ENCODE measurements at regions of chr11 and their contacts with region 1.

Region 1: DNA sequence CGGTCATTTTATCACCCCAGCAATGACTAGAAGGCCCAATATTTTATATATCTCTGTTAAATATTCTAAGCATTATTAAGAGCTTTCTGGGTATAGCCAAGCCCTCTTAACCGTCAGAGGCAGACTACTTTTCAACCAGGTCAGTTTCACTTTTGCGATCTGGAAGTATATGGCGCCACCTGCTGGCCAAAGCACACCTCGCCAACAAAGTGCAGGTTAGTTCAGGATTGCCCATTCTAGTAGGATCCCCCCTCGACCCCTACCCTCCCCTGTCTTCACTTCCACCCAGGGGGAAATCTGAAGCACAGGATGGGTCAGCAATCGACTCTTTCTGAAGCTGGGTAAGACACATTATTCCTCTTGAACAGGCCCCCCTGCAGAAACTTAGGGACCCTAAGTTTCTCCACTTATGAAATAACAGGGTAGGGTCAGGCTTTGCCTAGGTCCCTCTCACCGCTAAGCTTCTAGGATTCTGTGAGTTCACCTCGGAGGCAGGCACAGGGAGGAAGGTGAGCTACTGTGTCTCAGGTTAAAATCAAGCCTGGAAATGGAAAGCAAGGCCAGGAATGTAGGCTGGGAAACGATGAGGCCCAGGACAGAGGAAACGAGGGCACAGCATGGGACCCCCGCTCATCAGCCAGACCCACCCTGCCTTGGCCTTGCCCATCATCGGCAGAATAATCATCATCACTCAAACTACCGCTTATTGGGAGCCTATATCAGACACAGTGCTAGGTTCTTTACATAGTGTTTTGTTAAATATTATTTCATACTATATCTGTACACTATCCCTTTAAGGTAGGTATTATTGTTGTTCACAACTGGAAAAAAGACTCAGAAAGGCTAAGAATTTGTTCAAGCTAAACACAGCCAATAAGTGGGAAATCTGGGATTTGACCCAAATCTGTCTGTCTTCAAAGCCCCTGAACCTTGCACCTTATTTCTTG is 35.6 kb downstream of the KCNJ1 start:
- DNase-seq: peak; percentile 88
- H3K4me3 ChIP-seq: no peak overlapping the region
- H3K27ac ChIP-seq: no peak overlapping the region
- H3K4me1 ChIP-seq: peaks cover 17% of the 10 kb centered on the region
- H3K27me3 ChIP-seq: no peaks in the 10 kb centered on the region
- CTCF ChIP-seq: peak; percentile 98

Region 2: GRCh38 chr11:128026596-128026995 is 804.9 kb before region 1 on chr11:
- CTCF ChIA-PET with region 1: no interaction called
- POLR2A ChIA-PET with region 1: no interaction called
- intact Hi-C with region 1: loop called (anchors 2 kb)
- DNase-seq: no peak
- H3K4me3 ChIP-seq: no peak overlapping the region
- H3K27ac ChIP-seq: no peak overlapping the region
- H3K4me1 ChIP-seq: no peaks in the 10 kb centered on the region
- H3K27me3 ChIP-seq: peaks cover 70% of the 10 kb centered on the region
- CTCF ChIP-seq: no peak

Region 3: GRCh38 chr11:128157423-128158298 is 673.8 kb before region 1 on chr11:
- CTCF ChIA-PET with region 1: interaction called, 4 read pairs
- POLR2A ChIA-PET with region 1: no interaction called
- intact Hi-C with region 1: loop called (anchors 5 kb)
- DNase-seq: peak; percentile 86
- H3K4me3 ChIP-seq: no peak overlapping the region
- H3K27ac ChIP-seq: no peak overlapping the region
- H3K4me1 ChIP-seq: no peaks in the 10 kb centered on the region
- H3K27me3 ChIP-seq: peaks cover 14% of the 10 kb centered on the region
- CTCF ChIP-seq: peak; percentile 98

Region 4: GRCh38 chr11:128172046-128172878 is 659.2 kb before region 1 on chr11:
- CTCF ChIA-PET with region 1: no interaction called
- POLR2A ChIA-PET with region 1: no interaction called
- intact Hi-C with region 1: loop called (anchors 5 kb)
- DNase-seq: peak; percentile 88
- H3K4me3 ChIP-seq: no peak overlapping the region
- H3K27ac ChIP-seq: no peak overlapping the region
- H3K4me1 ChIP-seq: peaks cover 9% of the 10 kb centered on the region
- H3K27me3 ChIP-seq: peaks cover 23% of the 10 kb centered on the region
- CTCF ChIP-seq: peak; percentile 91

Region 5: GRCh38 chr11:128279866-128280265 is 551.6 kb before region 1 on chr11:
- CTCF ChIA-PET with region 1: no interaction called
- POLR2A ChIA-PET with region 1: no interaction called
- intact Hi-C with region 1: no loop called
- DNase-seq: no peak
- H3K4me3 ChIP-seq: no peak overlapping the region
- H3K27ac ChIP-seq: no peak overlapping the region
- H3K4me1 ChIP-seq: no peaks in the 10 kb centered on the region
- H3K27me3 ChIP-seq: peaks cover 93% of the 10 kb centered on the region
- CTCF ChIP-seq: no peak

Region 6: GRCh38 chr11:128290106-128290840 is 541.2 kb before region 1 on chr11:
- CTCF ChIA-PET with region 1: no interaction called
- POLR2A ChIA-PET with region 1: no interaction called
- intact Hi-C with region 1: loop called (anchors 5 kb)
- DNase-seq: peak; percentile 65
- H3K4me3 ChIP-seq: no peak overlapping the region
- H3K27ac ChIP-seq: no peak overlapping the region
- H3K4me1 ChIP-seq: no peaks in the 10 kb centered on the region
- H3K27me3 ChIP-seq: peaks cover 76% of the 10 kb centered on the region
- CTCF ChIP-seq: peak; percentile 89

Region 7: DNA sequence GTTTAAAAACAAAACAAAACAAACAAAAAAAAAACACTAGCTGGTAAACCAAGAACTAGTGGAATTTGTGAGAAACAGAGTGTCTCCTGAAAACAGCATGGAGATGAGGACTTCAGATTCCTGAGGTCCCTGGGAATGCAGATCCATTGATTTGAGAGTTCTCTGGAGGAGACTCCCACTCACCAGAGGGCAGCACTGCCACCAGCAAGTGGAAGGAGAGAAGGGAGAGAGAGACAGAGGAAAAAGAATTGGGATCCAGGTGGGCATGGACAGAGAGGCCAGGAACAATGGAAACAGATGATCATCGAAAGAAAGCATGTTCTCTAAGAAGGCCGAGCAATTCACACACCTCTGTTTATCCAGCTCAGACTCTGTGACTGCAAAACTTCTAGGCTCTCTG is 275.8 kb before region 1 on chr11:
- CTCF ChIA-PET with region 1: interaction called, 4 read pairs
- POLR2A ChIA-PET with region 1: no interaction called
- intact Hi-C with region 1: loop called (anchors 5 kb)
- DNase-seq: peak; percentile 24
- H3K4me3 ChIP-seq: no peak overlapping the region
- H3K27ac ChIP-seq: no peak overlapping the region
- H3K4me1 ChIP-seq: no peaks in the 10 kb centered on the region
- H3K27me3 ChIP-seq: peaks cover 30% of the 10 kb centered on the region
- CTCF ChIP-seq: peak; percentile 46

Region 8: DNA sequence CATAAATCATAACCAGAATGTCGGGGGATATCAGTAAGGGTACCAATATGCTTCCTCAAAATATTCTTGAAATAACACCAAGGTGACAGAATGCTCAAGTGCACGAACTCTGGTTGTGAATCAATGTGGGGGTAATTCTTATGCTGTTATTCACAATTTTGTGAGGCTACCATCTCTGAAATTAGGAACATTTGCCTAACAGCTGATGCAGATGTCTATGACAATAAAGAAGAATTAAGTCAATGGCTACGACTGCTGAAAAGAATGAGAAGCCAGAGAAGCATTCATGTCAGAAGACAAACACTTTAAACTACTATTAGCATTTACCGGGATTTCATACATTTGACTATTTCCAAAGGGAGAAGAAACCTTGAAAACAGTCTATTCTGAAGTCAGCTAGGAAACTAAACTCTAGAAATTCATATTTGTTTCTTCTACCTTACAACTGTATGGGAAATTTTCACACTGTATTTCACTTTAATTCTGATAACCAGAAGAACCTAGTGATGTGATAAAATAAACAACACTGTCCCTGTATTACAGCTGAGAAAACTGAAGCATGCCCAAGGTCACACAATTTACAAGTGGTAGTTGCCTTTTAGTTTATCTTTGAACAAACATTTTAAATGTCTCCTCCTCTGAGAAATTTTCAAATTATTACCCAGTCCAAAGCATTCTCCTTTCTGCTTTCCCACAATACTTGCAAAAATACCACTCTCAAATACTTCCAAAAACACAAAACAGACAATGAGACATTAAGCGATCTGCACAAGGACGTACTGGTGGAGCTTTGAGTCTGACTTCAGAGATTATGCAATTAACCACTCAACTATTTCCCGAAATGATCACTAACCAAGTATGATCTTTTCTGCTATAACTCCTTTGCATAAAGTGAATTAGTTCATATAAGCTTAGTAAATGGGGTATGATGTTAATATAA is 378.7 kb after region 1 on chr11:
- CTCF ChIA-PET with region 1: no interaction called
- POLR2A ChIA-PET with region 1: no interaction called
- intact Hi-C with region 1: no loop called
- DNase-seq: no peak
- H3K4me3 ChIP-seq: no peak overlapping the region
- H3K27ac ChIP-seq: no peak overlapping the region
- H3K4me1 ChIP-seq: no peaks in the 10 kb centered on the region
- H3K27me3 ChIP-seq: no peaks in the 10 kb centered on the region
- CTCF ChIP-seq: no peak